ENCODE measurements at regions of chr21 and their contacts with region 1.

Region 1: DNA sequence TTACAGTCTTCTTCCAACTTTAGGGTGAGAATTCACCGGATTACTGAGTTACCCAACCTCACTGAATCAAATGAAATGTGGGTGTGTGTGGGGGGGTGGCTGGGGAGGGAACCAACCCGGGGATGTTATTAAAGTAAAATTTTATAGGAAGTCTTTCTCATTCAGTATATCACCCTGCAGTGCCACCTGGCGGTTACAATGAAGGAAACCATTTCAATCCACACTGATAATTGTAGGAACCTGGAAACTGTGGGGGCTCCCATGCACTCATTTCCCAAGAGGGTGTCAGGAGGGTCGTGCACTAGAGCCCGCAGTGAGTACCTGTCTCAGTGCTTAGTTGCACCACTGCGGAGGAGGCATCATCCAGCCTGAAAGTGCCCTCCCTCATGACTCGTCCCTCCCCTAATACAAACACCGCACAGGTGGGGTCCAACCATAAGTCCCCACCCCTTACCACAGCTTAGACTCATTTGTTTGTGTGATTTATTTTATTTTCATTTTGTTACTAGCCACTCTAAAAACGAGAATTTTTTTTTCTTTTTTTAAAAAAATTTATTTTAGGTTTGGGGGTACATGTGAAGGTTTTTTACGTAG is 29.1 kb upstream of the IGSF5 start:
- DNase-seq: peak; percentile 40 to 74 (median 61)
- H3K4me3 ChIP-seq: no peak overlapping the region
- H3K27ac ChIP-seq: no peak overlapping the region
- H3K4me1 ChIP-seq: no peaks in the 10 kb centered on the region
- H3K27me3 ChIP-seq: peaks cover 0 to 8% (median 0%) of the 10 kb centered on the region in 5 experiments

Region 2: GRCh38 chr21:39518138-39518846 is 197.6 kb before region 1 on chr21:
- CTCF ChIA-PET with region 1: interaction called, 60 read pairs
- POLR2A ChIA-PET with region 1: interaction called, 3 read pairs
- DNase-seq: peak; percentile 66 to 81 (median 79)
- H3K4me3 ChIP-seq: no peak overlapping the region
- H3K27ac ChIP-seq: no peak overlapping the region
- H3K4me1 ChIP-seq: no peaks in the 10 kb centered on the region
- H3K27me3 ChIP-seq: peaks cover 0 to 2% (median 0%) of the 10 kb centered on the region in 5 experiments

Region 3: GRCh38 chr21:39527664-39528381 is 188.1 kb before region 1 on chr21:
- CTCF ChIA-PET with region 1: interaction called, 17 read pairs
- POLR2A ChIA-PET with region 1: no interaction called
- DNase-seq: peak in 1 of 3 donors; percentile 4
- H3K4me3 ChIP-seq: no peak overlapping the region
- H3K27ac ChIP-seq: no peak overlapping the region
- H3K4me1 ChIP-seq: peaks cover 0 to 10% (median 4%) of the 10 kb centered on the region in 4 experiments
- H3K27me3 ChIP-seq: peaks cover 0 to 20% (median 3%) of the 10 kb centered on the region in 5 experiments

Region 4: DNA sequence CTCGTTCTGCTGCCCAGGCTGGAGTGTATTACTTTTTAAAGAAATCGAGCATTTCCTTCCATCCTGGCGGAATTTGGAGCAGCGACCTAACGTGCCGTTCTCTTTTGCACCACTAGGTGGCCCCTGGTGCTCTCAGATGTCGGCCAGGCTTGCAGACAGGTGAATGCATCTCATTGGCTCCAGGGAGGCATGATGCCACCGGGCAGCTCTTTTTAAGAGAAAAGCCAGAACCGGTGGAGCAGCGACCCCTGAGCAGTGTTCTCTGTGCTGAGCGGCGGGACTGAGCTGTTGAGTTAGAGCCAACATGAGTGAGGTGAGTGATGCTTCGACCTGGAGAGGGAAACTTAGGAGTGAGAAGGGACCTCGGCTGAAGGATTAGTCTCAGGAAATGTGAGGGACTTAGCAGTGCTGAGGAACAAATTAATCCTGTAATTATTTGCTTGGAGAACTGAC is 151.3 kb after region 1 on chr21 and contains the start of gene PCP4:
- CTCF ChIA-PET with region 1: no interaction called
- POLR2A ChIA-PET with region 1: no interaction called
- DNase-seq: peak; percentile 22 to 45 (median 26)
- H3K4me3 ChIP-seq: no peak within 1 kb of the TSS
- H3K27ac ChIP-seq: no peak within 1 kb of the TSS
- H3K4me1 ChIP-seq: no peaks in the 10 kb centered on the region
- H3K27me3 ChIP-seq: peaks cover 2 to 30% (median 9%) of the 10 kb centered on the region in 5 experiments

Measured in common myeloid progenitor, CD34-positive (primary cell).